Endothelial cell of umbilical vein (primary cell): ENCODE measurements at regions of chr4 and their contacts with region 1.

Region 1: DNA sequence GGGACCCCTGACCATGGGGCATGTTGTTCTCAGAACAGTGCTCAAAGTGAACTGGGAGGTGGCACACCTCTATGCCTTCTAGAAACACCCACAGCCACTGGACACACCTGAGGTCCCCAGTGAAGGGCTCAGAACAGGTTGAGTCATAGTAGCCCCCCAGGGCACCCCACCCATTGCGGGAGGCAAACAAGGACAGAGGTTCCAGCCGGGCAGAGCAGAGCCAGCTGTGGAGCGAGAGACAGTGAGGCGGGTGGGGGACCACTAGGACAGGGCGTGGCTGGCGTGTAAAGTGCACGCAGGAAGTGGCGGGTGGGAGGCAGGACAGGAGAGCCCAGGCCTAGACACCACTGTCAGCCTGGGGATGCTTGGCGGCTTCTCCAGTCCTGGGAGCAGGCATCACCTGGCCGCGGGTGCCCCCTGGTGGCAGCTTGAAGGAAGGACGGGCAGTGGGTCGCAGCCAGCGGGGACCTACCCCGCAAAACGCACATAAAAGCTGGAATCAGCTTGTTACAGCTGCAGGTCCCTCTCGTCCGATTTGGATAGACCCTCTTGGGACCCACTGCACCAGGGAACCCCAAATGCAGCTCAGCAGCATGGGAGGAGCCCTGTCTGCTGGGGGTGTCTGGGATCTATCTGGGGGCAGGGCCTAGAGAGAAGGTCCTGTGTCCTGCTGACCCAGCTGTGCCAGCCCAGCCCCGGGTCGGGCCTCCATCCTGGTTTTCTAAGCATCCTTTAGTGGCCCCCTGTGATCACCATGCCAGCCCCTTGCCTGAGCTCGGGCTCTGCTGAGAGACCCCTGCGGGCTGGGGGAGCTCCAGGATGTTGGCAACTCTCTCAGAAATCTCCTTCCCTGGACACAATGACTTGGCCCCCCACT is 57.6 kb downstream of the WFS1 start:
- DNase-seq: peak; percentile 65
- H3K4me3 ChIP-seq: no peak overlapping the region
- H3K27ac ChIP-seq: no peak overlapping the region
- H3K4me1 ChIP-seq: peaks cover 14% of the 10 kb centered on the region
- H3K27me3 ChIP-seq: no peaks in the 10 kb centered on the region
- CTCF ChIP-seq: peak; percentile 86 to 94
- POLR2A ChIP-seq: no peak

Region 2: GRCh38 chr4:5998333-5998936 is 328.8 kb before region 1 on chr4:
- CTCF ChIA-PET with region 1: interaction called, 38 read pairs
- POLR2A ChIA-PET with region 1: no interaction called
- dilution Hi-C with region 1: no loop called
- intact Hi-C with region 1: loop called (anchors 1 kb)
- DNase-seq: peak; percentile 46
- H3K4me3 ChIP-seq: no peak overlapping the region
- H3K27ac ChIP-seq: no peak overlapping the region
- H3K4me1 ChIP-seq: no peaks in the 10 kb centered on the region
- H3K27me3 ChIP-seq: no peaks in the 10 kb centered on the region
- CTCF ChIP-seq: peak; percentile 88 to 90
- POLR2A ChIP-seq: no peak

Region 3: GRCh38 chr4:6269616-6270511 is 57.4 kb before region 1 on chr4 and contains the start of gene WFS1:
- CTCF ChIA-PET with region 1: interaction called, 623 read pairs
- POLR2A ChIA-PET with region 1: no interaction called
- dilution Hi-C with region 1: no loop called
- intact Hi-C with region 1: no loop called
- DNase-seq: peak; percentile 99
- H3K4me3 ChIP-seq: peak within 1 kb of the TSS; percentile 60 to 76 (median 61)
- H3K27ac ChIP-seq: no peak within 1 kb of the TSS
- H3K4me1 ChIP-seq: peaks cover 15% of the 10 kb centered on the region
- H3K27me3 ChIP-seq: peaks cover 11 to 13% of the 10 kb centered on the region in 2 experiments
- CTCF ChIP-seq: no peak
- POLR2A ChIP-seq: peak; percentile 54
- total RNA-seq, gene WFS1: 42.7 and 48.2 TPM in 2 replicates

Region 4: DNA sequence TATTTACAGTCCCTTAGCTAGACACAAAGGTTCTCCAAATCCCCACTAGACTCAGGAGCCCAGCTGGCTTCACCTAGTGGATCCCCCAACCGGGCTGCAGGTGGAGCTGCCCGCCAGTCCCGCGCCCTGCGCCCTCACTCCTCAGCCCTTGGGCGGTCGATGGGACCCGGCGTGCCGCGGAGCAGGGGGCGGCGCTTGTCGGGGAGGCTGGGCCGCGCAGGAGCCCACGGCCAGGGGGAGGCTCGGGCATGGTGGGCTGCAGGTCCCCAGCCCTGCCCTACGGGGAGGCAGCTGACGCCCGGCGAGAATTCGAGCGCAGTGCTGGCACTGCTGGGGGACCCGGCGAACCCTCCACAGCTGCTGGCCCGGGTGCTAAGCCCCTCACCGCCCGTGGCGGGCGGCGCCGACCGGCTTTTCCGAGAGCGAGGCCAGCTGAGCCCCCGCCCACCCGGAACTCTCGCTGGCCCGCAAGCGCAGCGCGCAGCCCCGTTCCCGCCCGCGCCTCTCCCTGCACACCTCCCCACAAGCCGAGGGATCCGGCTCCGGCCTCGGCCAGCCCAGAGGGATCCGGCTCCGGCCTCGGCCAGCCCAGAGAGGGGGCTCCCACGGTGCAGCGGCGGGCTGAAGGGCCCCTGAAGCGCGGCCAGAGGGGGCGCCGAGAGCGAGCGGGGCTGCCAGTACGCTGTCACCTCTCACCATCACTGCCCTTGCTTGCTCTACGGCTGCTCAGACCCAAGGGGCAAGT is 18.2 kb before region 1 on chr4:
- CTCF ChIA-PET with region 1: interaction called, 9 read pairs
- POLR2A ChIA-PET with region 1: no interaction called
- dilution Hi-C with region 1: no loop called
- intact Hi-C with region 1: loop called (anchors 2 kb)
- DNase-seq: peak; percentile 44
- H3K4me3 ChIP-seq: peak overlapping the region in 2 of 3 experiments; percentile 18 to 32
- H3K27ac ChIP-seq: no peak overlapping the region
- H3K4me1 ChIP-seq: no peaks in the 10 kb centered on the region
- H3K27me3 ChIP-seq: peaks cover 16 to 25% of the 10 kb centered on the region in 2 experiments
- CTCF ChIP-seq: peak in 1 of 2 donors; percentile 25
- POLR2A ChIP-seq: no peak

Region 5: GRCh38 chr4:6546681-6547447 is 219.6 kb after region 1 on chr4:
- CTCF ChIA-PET with region 1: interaction called, 21 read pairs
- POLR2A ChIA-PET with region 1: no interaction called
- dilution Hi-C with region 1: no loop called
- intact Hi-C with region 1: loop called (anchors 1 kb)
- DNase-seq: peak; percentile 44
- H3K4me3 ChIP-seq: no peak overlapping the region
- H3K27ac ChIP-seq: no peak overlapping the region
- H3K4me1 ChIP-seq: no peaks in the 10 kb centered on the region
- H3K27me3 ChIP-seq: no peaks in the 10 kb centered on the region
- CTCF ChIP-seq: peak; percentile 89 to 94
- POLR2A ChIP-seq: no peak